GM18951 (cell line): ENCODE measurements at regions of chr5 and their contacts with region 1.

Region 1: DNA sequence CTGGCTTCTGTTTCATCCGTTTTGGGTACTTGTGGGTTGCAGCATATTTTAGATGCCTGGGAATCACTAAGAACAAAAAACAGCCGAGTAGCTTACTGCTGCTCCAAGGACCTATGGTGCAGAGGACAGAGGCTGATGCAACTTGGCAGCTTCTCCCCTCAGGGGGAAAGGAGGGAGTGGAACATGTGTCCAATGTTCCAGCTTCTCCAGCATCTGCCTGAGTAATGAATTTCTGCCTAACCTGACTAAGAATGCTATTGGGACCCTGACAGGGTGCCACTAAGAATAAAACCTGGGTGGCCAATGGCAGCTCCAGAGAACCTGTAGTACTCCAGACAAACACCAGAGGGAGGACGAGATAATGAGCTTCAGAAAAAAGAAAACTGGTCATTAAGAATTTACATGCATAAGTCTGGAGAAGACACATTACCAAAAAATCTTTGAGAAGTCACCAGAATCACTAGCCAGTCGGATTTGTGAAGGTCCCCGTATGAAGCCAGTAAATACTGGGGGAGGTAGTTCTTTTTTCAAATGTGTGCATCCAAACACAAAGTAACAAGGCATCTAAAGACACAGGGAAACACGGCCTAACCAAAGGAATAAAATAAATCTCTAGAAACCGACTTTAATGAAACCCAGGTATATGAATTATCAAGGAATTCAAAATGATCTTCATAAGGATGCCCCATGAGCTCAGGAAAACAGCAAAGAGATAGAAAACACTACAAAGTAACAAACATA is 293.5 kb downstream of the HINT1 start:
- POLR2A ChIP-seq: no peak

Region 2: DNA sequence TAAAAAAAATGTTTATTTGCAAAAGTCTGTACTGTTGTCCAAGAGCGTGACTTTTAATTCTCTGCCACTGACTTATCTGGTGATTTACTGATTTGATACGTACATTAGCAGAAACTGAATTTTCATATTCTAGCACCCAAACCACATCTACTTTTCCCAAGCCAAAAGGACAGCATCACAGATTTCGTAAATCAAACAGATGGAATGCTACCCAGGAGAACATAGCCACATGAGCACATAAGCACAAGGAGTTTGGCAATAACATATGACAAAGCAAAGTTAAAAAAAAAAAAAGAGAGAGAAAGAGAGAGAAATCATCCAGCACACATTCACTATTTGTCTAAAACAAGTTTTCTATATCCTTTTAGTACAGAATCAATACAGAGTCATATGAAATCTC is 209.9 kb after region 1 on chr5:
- in situ Hi-C with region 1: no loop called
- POLR2A ChIP-seq: no peak

Region 3: DNA sequence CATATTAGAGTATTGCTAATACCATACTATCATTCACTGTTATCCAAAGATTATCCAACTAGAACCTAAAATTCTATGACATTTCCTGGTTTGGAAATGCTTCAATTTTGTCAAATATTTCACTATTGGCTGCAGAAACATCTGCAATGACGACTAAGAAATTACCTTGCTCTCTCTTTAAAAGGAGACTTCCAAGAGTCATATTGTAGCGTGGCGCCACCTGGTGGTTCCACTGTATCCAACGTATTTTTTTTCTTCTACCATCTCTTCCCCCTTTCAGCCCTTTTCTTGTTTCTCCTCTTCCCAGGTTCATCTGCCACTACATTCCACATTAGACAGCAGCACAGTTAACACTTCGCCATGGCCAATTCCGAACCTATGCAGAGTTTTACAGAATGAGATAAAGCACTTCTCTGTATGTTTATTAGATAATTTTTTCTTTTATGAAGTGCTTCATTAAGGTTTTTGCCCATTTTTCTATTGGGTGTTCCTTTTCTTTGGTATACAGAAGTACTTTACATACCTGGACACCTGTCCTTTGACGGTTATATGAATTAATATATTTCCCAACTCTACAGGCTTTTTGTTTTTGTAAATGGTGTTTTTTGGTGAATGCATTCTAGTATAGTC is 545.8 kb after region 1 on chr5:
- in situ Hi-C with region 1: loop called (anchors 25 kb)
- POLR2A ChIP-seq: no peak